Activated CD4-positive, alpha-beta memory T cell treated with anti-CD3 and anti-CD28 coated beads for 36 hours (primary cell): ENCODE measurements at regions of chr19 and their contacts with region 1.

Region 1: DNA sequence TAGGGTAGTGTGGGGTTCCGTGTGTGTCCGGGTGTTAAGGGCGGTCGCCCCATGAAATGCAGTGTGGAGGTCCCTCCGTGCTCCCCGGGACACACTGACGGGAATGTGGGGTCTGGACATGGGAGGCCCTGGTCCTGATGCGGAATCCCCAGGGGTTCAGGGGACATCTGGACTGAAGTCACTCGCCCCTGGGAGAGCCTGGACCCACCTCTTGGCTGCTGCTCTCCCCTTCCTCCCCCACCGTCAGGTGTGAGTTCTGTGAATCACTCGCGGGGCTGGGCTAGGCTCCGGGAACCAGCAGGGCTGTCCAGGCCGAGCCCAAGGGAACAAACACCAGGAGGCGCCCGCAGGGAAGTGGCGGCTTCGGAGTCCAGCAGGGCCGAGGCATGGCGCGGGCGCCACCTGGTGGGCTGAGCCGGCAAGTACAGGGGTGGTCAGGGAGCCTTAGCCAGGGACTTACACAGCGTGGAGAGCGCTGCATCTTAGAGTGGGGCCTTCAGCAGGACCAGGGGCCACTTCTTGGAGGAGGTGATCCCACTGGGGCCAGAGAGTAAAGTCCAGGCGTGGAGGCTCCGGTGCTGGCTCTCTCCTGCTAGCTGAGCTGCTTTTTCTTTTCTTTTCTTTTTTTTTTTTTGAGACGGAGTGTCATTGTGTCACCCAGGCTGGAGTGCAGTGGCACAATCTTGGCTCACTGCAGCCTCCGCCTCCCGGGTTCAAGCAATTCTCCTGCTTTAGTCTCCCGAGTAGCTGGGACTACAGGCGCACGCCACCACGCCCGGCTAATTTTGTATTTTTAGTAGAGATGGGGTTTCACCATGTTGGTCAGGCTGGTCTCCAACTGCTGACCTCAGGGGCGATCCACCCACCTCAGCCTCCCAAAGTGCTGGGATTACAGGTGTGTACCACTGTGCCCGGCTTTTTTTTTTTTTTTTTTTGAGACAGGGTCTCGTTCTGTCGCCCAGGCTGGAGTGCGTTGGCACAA is 20.1 kb downstream of the WTIP start:
- DNase-seq: peak; percentile 93
- H3K4me3 Mint-ChIP-seq: no peak overlapping the region
- H3K27ac Mint-ChIP-seq: no peak overlapping the region
- H3K4me1 Mint-ChIP-seq: peaks cover 11% of the 10 kb centered on the region
- H3K27me3 Mint-ChIP-seq: peaks cover 13% of the 10 kb centered on the region

Region 2: DNA sequence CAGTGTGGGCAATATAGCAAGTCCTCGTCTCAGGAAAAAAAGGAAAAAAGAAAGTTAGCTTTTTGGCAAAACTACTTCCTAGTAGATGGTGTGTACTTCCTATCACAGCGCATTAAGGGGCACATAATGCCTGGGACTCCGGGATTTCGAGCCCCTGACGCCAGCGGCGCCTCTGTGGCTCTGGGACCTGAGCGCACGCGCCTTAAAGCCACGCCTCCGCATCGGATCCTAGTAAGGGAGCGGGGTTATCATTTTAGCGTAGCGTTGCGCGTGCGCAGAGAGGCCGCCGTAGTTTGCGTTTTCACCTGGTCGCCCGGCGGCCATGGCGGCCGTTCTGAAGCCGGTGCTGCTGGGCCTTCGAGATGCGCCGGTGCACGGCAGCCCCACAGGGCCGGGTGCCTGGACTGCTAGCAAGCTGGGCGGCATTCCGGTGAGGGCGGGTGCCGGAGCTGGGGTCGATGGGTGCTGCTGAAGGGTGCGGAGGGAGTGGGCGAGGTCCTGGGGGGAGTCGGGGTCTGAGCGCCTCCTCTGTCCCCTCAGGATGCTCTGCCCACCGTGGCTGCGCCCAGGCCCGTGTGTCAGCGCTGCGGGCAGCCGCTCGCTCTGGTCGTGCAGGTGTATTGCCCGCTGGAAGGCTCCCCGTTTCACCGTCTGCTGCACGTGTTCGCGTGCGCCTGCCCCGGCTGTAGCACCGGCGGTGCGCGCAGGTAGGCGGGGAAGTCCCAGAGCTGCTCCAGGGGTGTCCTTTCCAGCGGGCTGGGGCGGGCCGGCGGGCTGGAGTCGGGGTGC is 97.3 kb before region 1 on chr19 and contains the start of gene PDCD2L:
- CTCF ChIA-PET with region 1: no interaction called
- POLR2A ChIA-PET with region 1: no interaction called
- intact Hi-C with region 1: loop called (anchors 5 kb)
- DNase-seq: peak; percentile 95
- H3K4me3 Mint-ChIP-seq: peak within 1 kb of the TSS; percentile 90
- H3K27ac Mint-ChIP-seq: peak within 1 kb of the TSS; percentile 73
- H3K4me1 Mint-ChIP-seq: peaks cover 24% of the 10 kb centered on the region
- H3K27me3 Mint-ChIP-seq: no peaks in the 10 kb centered on the region
- total RNA-seq, gene PDCD2L: 29.8 TPM

Region 3: DNA sequence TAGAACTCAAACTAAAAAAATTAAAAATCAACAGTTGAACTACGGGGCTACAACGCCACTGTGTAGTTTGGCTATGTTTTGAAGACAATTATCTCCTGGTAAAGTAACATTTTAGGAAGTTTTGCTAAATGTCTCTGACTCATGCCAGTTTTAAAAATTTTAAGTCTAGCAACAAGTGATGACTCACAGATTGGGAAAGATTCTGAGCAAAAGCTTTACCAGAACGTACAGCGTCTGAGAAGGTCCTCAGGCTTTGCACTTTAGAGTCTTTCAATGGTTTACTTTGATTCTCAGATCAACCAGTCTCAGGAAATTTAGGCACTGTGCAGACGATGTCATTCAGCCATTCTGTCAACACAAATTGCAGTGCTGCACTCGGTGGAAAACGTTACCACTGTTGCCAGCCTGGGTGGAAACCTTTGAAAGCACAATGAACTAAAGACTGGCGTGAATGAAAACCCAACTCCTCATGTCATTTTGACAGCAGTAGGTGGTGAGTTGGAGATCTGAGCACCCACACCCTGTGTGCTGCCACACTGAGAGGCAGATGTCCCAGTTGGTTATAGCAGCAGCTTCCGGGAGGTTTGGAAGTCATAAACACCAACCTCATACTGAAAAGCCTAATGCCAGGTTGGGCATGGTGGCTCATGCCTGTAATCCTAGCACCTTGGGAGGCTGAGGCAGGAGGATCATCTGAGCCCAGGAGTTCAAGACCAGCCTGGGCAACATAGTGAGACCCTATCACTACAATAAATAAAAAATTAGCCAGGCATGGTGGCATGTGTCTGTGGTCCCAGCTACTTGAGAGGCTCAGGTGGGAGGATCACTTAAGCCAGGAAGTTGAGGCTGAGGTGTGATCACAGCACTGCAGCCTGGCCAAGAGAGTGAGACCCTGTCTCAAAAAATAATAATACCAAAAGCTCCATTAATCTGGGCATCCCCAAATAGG is 26.3 kb before region 1 on chr19:
- CTCF ChIA-PET with region 1: interaction called, 6 read pairs
- POLR2A ChIA-PET with region 1: no interaction called
- intact Hi-C with region 1: loop called (anchors 2 kb)
- DNase-seq: peak; percentile 62
- H3K4me3 Mint-ChIP-seq: no peak overlapping the region
- H3K27ac Mint-ChIP-seq: peak overlapping the region; percentile 81
- H3K4me1 Mint-ChIP-seq: peaks cover 10% of the 10 kb centered on the region
- H3K27me3 Mint-ChIP-seq: peaks cover 9% of the 10 kb centered on the region

Region 4: GRCh38 chr19:34712395-34713261 is 211.0 kb after region 1 on chr19:
- CTCF ChIA-PET with region 1: no interaction called
- POLR2A ChIA-PET with region 1: no interaction called
- intact Hi-C with region 1: loop called (anchors 5 kb)
- DNase-seq: peak; percentile 60
- H3K4me3 Mint-ChIP-seq: no peak overlapping the region
- H3K27ac Mint-ChIP-seq: no peak overlapping the region
- H3K4me1 Mint-ChIP-seq: no peaks in the 10 kb centered on the region
- H3K27me3 Mint-ChIP-seq: peaks cover 15% of the 10 kb centered on the region